ENCODE measurements at regions of chr10 and their contacts with region 1.

Region 1: DNA sequence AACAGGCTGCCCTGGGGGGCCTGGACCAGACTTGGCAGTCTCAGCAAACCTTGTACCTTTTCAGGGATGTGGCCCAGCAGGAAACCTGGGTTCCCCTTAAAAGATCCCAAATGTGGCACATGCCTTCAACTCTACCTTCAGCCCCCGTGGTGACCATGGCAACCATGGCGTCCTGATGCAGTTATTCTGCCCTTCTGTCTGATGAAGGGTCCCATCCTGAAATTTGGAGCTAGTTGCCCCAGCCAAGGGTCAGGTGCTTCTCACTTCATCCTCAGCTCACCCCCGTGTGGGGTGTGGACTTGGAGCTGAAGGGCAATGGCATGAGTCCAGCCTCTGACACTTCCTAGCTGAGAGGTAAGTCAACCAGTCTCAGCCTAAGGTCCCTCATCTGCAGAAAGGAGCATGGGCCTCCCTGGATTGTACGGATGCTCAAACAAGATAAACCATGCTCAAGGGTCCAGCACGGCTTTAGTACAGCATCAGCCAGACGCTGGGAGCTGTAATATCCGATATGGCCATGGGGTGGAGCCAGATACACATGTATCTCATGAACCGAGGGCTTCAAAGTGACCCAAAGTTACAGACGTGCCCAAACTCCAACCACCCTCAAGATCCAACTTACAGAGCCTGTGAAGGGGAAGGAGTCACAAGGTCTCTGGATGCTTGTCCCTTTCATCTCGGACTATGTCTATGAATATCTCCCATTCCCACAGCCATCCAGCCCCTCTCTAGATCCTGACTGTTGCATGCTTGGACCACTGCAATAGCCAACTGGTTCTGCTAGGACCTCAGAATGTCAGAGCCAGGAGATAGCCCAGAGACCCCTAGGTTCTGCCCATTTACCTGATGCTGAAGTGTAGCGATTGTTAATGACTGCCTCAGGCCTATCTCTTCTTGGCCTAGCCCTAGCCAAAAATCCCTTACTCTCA is 142.5 kb downstream of the SH3PXD2A start:
- DNase-seq: peak; percentile 85
- H3K4me3 Mint-ChIP-seq: no peak overlapping the region
- H3K27ac Mint-ChIP-seq: no peak overlapping the region
- H3K4me1 Mint-ChIP-seq: peaks cover 4% of the 10 kb centered on the region
- H3K27me3 Mint-ChIP-seq: no peaks in the 10 kb centered on the region

Region 2: GRCh38 chr10:103645141-103646054 is 67.4 kb before region 1 on chr10:
- CTCF ChIA-PET with region 1: no interaction called
- POLR2A ChIA-PET with region 1: no interaction called
- DNase-seq: no peak
- H3K4me3 Mint-ChIP-seq: no peak overlapping the region
- H3K27ac Mint-ChIP-seq: no peak overlapping the region
- H3K4me1 Mint-ChIP-seq: no peaks in the 10 kb centered on the region
- H3K27me3 Mint-ChIP-seq: no peaks in the 10 kb centered on the region

Region 3: GRCh38 chr10:103659674-103660363 is 53.0 kb before region 1 on chr10:
- CTCF ChIA-PET with region 1: no interaction called
- POLR2A ChIA-PET with region 1: no interaction called
- DNase-seq: peak; percentile 80
- H3K4me3 Mint-ChIP-seq: peak overlapping the region; percentile 89
- H3K27ac Mint-ChIP-seq: peak overlapping the region; percentile 92
- H3K4me1 Mint-ChIP-seq: peaks cover 17% of the 10 kb centered on the region
- H3K27me3 Mint-ChIP-seq: no peaks in the 10 kb centered on the region

Region 4: GRCh38 chr10:103696411-103697145 is 16.3 kb before region 1 on chr10:
- CTCF ChIA-PET with region 1: interaction called, 12 read pairs
- POLR2A ChIA-PET with region 1: no interaction called
- DNase-seq: peak; percentile 83
- H3K4me3 Mint-ChIP-seq: peak overlapping the region; percentile 47
- H3K27ac Mint-ChIP-seq: peak overlapping the region; percentile 91
- H3K4me1 Mint-ChIP-seq: peaks cover 40% of the 10 kb centered on the region
- H3K27me3 Mint-ChIP-seq: peaks cover 4% of the 10 kb centered on the region

Region 5: GRCh38 chr10:103731609-103732270 is 18.9 kb after region 1 on chr10:
- CTCF ChIA-PET with region 1: interaction called, 10 read pairs
- POLR2A ChIA-PET with region 1: no interaction called
- DNase-seq: no peak
- H3K4me3 Mint-ChIP-seq: no peak overlapping the region
- H3K27ac Mint-ChIP-seq: no peak overlapping the region
- H3K4me1 Mint-ChIP-seq: peaks cover 4% of the 10 kb centered on the region
- H3K27me3 Mint-ChIP-seq: peaks cover 6% of the 10 kb centered on the region

Region 6: GRCh38 chr10:103847909-103848468 is 135.2 kb after region 1 on chr10:
- CTCF ChIA-PET with region 1: interaction called, 13 read pairs
- POLR2A ChIA-PET with region 1: no interaction called
- DNase-seq: peak; percentile 16
- H3K4me3 Mint-ChIP-seq: no peak overlapping the region
- H3K27ac Mint-ChIP-seq: no peak overlapping the region
- H3K4me1 Mint-ChIP-seq: peaks cover 25% of the 10 kb centered on the region
- H3K27me3 Mint-ChIP-seq: peaks cover 33% of the 10 kb centered on the region

Region 7: DNA sequence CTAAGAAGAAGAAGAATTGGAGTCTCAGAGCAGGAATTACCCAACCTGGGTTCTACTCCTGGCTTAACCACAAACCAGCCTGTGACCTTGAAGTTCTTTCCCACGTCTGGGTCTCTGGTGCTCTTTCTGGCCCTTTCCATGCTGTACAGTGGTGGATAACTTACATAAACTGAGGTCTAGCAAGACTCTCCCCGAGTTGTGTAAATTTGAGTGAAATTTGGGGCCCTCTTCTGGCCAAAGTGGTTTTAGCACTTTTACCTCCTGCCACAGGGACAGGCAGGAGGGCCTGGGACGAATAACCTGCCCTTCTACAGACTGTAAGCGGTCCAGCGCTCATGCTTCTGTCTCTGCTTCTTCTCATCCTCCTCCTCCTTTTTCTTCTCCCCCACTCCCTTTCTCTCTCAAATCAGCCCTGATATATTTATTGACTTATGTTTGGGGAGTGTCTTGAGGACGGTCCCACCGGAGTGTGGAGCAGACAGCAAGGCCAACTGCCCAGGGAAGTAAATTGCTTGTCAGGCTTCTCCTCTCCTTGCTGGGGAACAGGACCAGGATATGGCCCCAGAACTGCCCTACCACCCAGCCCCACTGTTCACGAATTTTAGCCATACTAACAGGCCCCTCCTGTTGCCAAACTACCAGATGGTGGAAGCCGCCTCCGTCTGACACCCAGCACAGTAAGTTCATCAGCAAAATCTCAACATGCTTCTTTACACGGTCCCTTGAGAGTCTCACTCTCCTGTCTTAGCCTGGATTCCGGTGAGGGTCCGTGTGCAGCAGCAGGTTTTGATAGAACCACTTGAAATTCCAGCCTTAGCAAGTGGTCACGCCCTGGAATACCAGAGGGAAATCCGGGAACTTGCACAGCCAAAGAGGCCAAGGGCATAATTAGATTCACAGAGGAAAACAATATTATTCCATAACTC is 146.6 kb after region 1 on chr10:
- CTCF ChIA-PET with region 1: interaction called, 16 read pairs
- POLR2A ChIA-PET with region 1: no interaction called
- DNase-seq: peak; percentile 76
- H3K4me3 Mint-ChIP-seq: no peak overlapping the region
- H3K27ac Mint-ChIP-seq: no peak overlapping the region
- H3K4me1 Mint-ChIP-seq: peaks cover 8% of the 10 kb centered on the region
- H3K27me3 Mint-ChIP-seq: peaks cover 44% of the 10 kb centered on the region

Region 8: DNA sequence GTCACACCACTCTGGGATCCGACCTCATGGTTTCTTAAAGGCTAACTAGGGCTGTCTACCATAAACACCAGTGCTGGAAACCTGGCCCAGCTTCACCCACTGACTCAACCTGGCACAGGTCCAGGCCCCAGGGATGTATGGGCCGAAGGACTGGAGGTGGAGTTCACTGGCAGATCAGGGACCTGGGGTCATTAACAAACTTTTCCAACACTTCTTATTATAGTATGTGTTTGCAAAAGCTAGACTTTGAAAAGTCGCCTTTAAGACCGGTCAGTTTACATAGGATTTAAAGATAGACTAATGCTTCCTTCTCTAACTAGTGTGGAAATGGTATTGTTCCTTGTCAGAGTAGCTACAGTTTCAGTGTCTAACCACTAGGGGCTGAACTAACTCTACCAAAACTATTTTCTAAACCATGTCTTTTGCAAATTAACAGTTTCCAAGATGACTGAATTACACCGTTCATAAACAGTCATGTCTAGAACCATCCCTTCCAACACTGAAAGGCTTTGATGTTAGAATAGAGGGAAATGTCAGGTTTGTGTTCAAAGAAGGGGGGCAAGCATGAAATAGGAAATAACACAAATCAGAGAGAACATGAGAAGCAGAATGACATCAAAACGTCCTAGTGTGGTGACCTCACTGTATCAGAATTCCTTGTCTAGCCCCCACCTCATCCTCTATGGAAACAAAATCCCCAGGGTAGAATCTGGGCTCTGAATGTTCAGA is 175.4 kb after region 1 on chr10:
- CTCF ChIA-PET with region 1: interaction called, 15 read pairs
- POLR2A ChIA-PET with region 1: no interaction called
- DNase-seq: peak; percentile 25
- H3K4me3 Mint-ChIP-seq: no peak overlapping the region
- H3K27ac Mint-ChIP-seq: peak overlapping the region; percentile 76
- H3K4me1 Mint-ChIP-seq: peaks cover 32% of the 10 kb centered on the region
- H3K27me3 Mint-ChIP-seq: no peaks in the 10 kb centered on the region

Measured in activated CD4-positive, alpha-beta T cell treated with anti-CD3 and anti-CD28 coated beads, Interleukin-2, amount 10 ng/mL, durations not matched to agents 7 days and 5 days (primary cell).